ENCODE measurements at regions of chr14 and their contacts with region 1.

Region 1: GRCh38 chr14:68248481-68249255 is 429.1 kb downstream of the RAD51B start:
- DNase-seq: peak; percentile 54
- ATAC-seq: peak; percentile 61
- H3K4me3 ChIP-seq: no peak overlapping the region
- H3K27ac ChIP-seq: no peak overlapping the region
- H3K4me1 ChIP-seq: peaks cover 65% of the 10 kb centered on the region
- H3K27me3 ChIP-seq: no peaks in the 10 kb centered on the region
- CTCF ChIP-seq: peak; percentile 69
- EP300 ChIP-seq: no peak
- POLR2A ChIP-seq: no peak
- RAD21 ChIP-seq: peak; percentile 62; the same call in 1 of the 2 replicates

Region 2: GRCh38 chr14:67943947-67944346 is 304.7 kb before region 1 on chr14:
- CTCF ChIA-PET with region 1: no interaction called
- POLR2A ChIA-PET with region 1: no interaction called
- in situ Hi-C with region 1: loop called (anchors 10 kb)
- intact Hi-C with region 1: loop called (anchors 1 kb)
- DNase-seq: peak; percentile 73
- ATAC-seq: peak; percentile 60; the same call in 2 of the 3 replicates
- H3K4me3 ChIP-seq: no peak overlapping the region
- H3K27ac ChIP-seq: no peak overlapping the region
- H3K4me1 ChIP-seq: peaks cover 42% of the 10 kb centered on the region
- H3K27me3 ChIP-seq: no peaks in the 10 kb centered on the region
- CTCF ChIP-seq: peak; percentile 80
- EP300 ChIP-seq: no peak
- POLR2A ChIP-seq: no peak
- RAD21 ChIP-seq: peak; percentile 73

Region 3: DNA sequence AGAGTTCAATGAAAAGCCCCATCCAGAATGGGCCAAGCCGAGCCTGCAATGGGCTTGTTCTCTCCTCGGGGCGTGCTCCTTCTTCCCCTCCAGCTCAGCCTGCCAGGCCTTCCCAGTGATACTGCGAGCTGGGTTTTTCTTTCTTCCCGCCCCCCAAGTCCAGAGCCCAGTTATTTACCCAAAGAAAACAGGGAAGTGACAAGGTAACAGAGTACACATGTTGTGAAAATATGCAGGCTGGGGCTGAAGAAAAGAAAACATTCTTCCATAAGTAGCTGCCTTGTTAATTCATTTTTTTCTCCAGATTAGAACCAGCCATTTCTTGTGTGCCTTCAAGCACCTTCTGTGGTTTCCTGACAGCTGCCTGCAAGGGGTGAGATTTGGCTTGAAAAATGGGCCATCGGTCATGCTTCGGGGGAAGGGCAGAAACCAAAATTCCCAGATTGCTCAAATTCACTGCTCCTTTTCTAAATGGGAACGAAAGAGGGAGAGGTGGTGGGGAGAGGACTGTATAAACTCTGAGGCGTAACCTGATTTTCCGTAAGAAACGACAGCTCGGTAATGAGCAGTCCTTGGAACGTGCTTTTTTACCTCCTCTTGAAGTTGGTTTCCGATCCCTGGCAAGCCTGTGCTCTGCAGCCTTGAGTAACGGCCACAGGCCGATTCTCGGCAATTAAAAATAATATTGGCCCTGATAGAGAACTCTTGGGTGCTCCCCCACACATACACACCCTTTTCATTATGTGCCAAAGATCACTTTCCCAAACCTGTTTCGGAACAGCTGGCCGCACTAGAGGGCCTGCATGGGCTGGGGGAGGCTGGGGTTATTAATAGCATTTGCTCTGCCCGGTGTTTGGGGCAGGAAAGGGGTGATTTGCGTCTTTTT is 314.8 kb after region 1 on chr14:
- CTCF ChIA-PET with region 1: no interaction called
- POLR2A ChIA-PET with region 1: no interaction called
- in situ Hi-C with region 1: no loop called
- intact Hi-C with region 1: no loop called
- DNase-seq: peak; percentile 61
- ATAC-seq: peak; percentile 42
- H3K4me3 ChIP-seq: peak overlapping the region in 1 of 3 experiments; percentile 19; a peak in 1 of 6 replicates
- H3K27ac ChIP-seq: peak overlapping the region; percentile 22
- H3K4me1 ChIP-seq: peaks cover 80% of the 10 kb centered on the region
- H3K27me3 ChIP-seq: no peaks in the 10 kb centered on the region
- CTCF ChIP-seq: no peak
- EP300 ChIP-seq: peak in 1 of 2 experiments; percentile 77; a peak in 2 of 4 replicates
- POLR2A ChIP-seq: peak in 1 of 2 experiments; percentile 29; a peak in 1 of 4 replicates
- RAD21 ChIP-seq: no peak

Region 4: DNA sequence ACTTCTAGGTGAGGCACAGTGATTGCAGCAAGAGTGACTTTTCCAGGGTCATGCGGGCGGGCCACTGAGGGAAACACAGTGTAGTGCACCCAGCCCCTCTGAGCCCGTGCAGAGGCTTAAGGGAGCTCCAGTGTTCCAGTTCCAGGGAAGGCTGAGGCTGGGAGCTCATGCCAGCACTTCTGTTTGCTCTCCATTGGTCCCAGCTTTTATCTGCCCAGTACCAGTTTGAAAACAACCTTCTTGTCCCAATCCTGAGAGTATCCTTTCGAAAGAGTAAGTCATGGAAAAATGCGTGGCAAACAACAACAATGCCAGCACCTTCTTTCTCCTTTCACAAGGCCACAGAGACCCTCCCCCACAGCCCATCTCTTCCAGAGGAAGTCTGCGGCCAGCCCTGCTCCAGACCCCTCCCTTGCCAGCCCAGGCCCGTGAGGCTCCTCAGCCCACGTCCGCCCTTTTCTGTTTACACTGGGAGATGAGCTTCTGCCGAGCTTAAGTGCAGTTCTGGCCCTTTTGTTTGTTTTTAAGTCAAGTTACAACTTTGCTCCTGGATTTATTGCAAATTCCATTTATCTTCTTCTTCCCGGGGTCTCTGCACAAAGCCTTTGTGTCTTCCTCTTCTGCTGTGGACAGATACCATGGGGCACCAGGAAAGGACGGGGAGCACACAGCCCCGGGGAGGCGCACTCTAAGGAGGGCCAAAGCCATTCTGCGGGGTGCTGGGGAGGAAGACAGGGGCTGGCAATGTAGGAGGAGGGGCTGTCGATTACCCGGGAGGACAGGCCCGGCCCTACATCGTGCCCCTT is 358.6 kb after region 1 on chr14:
- CTCF ChIA-PET with region 1: interaction called, 4 read pairs
- POLR2A ChIA-PET with region 1: no interaction called
- in situ Hi-C with region 1: no loop called
- intact Hi-C with region 1: loop called (anchors 10 kb)
- DNase-seq: peak; percentile 68
- ATAC-seq: peak; percentile 76
- H3K4me3 ChIP-seq: peak overlapping the region in 1 of 3 experiments; percentile 55; a peak in 3 of 6 replicates
- H3K27ac ChIP-seq: peak overlapping the region; percentile 59
- H3K4me1 ChIP-seq: peaks cover 84% of the 10 kb centered on the region
- H3K27me3 ChIP-seq: no peaks in the 10 kb centered on the region
- CTCF ChIP-seq: peak; percentile 18; the same call in 1 of the 2 replicates
- EP300 ChIP-seq: peak in 1 of 2 experiments; percentile 73; a peak in 2 of 4 replicates
- POLR2A ChIP-seq: 0 out of 4 replicates have a peak, but pooled peaks of 1 of the 2 experiments have one; percentile 25
- RAD21 ChIP-seq: no peak

Region 5: DNA sequence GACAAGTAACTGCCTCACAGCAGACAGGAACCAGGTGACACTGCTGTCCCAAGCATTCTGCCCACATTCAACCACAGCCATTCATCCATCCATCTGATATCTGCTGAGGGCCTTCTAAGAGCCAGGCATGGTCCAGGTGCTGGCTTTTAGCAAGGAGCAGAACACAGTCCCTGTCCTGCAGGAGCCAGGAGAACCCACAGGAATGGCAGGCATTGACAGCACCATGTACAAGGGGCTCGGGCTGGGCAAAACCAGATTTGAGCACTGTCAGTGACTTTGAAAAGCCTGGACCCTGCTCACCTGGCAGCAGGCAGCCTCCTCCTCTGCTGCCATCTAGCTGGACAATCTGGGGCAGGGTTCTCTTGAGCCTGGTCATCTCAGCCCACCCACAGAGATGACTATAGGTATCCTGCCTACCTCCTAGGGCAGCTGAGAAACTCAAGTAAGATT is 407.3 kb after region 1 on chr14:
- CTCF ChIA-PET with region 1: no interaction called
- POLR2A ChIA-PET with region 1: no interaction called
- in situ Hi-C with region 1: no loop called
- intact Hi-C with region 1: loop called (anchors 10 kb)
- DNase-seq: peak; percentile 26
- ATAC-seq: peak; percentile 72
- H3K4me3 ChIP-seq: peak overlapping the region in 2 of 3 experiments; percentile 10 to 53; a peak in 1 of 6 replicates
- H3K27ac ChIP-seq: no peak overlapping the region
- H3K4me1 ChIP-seq: peaks cover 60% of the 10 kb centered on the region
- H3K27me3 ChIP-seq: no peaks in the 10 kb centered on the region
- CTCF ChIP-seq: peak; percentile 78
- EP300 ChIP-seq: no peak
- POLR2A ChIP-seq: no peak
- RAD21 ChIP-seq: peak; percentile 74

Region 6: DNA sequence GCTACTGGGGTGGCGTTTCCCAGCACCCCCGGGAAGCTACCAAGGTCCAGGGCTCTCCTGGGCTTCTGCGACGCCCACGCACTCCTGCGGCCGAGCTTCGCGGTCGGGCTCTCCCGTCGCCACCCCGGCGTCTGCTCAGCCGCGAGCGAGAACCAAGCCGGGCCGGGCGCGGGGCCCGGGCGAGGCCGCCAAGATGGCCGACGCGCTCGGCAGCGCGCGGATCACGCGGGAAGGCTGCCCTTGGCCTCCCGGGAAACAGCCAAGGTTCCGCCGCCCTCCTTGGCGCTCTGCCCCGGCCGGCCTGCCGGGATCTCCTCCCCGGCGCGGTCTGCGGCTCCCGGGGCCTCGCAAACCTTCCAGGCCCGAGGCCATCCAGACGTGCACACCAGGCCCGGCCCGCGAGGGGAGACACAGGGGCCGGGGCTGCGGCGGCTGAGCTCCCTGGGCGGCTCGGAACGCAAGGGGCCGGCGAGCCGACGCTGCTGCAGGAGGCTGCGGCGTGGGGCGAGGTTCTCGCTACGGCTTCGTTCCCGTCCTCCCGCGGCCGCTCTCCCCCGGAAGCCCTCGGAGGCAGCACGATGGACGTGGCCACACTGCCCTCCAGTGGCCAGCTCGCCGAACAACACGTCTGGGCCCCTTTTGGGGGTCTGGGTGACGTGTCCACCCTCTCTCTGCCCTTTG is 567.7 kb after region 1 on chr14:
- CTCF ChIA-PET with region 1: interaction called, 15 read pairs
- POLR2A ChIA-PET with region 1: no interaction called
- in situ Hi-C with region 1: loop called (anchors 5 kb)
- intact Hi-C with region 1: loop called (anchors 1 kb)
- DNase-seq: peak; percentile 63
- ATAC-seq: peak; percentile 76
- H3K4me3 ChIP-seq: peak overlapping the region in 2 of 3 experiments; percentile 47 to 66; a peak in 4 of 6 replicates
- H3K27ac ChIP-seq: peak overlapping the region; percentile 10
- H3K4me1 ChIP-seq: peaks cover 77% of the 10 kb centered on the region
- H3K27me3 ChIP-seq: no peaks in the 10 kb centered on the region
- CTCF ChIP-seq: peak; percentile 99
- EP300 ChIP-seq: no peak
- POLR2A ChIP-seq: no peak
- RAD21 ChIP-seq: peak; percentile 99